ENCODE measurements at regions of chr22 and their contacts with region 1.

Region 1: DNA sequence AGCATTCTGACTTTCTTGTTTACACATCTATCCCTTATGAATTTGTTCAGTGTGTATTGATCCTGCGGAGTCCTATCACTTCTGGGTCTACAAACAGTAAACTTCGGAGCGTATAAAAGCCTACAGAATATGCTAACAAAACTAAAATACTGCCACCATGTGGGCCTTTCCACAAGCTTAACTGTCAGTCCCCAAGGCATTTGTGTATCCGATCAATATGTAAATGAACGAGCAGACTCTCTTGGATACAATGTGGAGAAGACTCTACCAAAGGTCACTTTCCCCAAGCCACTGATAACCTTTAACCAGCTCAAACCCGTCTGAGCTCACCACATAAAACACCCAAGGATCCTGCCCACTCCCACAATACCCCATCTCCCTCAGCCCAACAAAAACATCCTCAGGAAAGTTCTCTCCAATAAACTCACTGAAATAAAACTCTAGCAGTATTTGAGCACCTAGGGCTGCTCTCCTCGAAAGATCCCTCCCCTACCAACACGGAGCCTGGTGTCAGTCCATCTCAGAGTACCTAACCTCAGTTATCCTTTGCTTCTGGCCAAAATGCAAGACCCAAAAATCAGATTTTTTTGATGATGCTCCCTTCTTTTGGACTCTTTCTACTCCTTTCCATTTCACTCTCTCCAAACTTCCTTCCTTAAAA is 17.8 kb downstream of the ADA2 start:
- DNase-seq: peak; percentile 53
- ATAC-seq: peak; percentile 95
- H3K4me3 ChIP-seq: no peak overlapping the region; a peak in 1 of 6 replicates
- H3K27ac ChIP-seq: no peak overlapping the region
- H3K4me1 ChIP-seq: peaks cover 12% of the 10 kb centered on the region
- H3K27me3 ChIP-seq: no peaks in the 10 kb centered on the region
- CTCF ChIP-seq: peak; percentile 68
- EP300 ChIP-seq: no peak
- POLR2A ChIP-seq: no peak
- RAD21 ChIP-seq: no peak

Region 2: GRCh38 chr22:17171313-17172171 is 29.9 kb before region 1 on chr22:
- CTCF ChIA-PET with region 1: no interaction called
- POLR2A ChIA-PET with region 1: interaction called, 13 read pairs
- in situ Hi-C with region 1: no loop called
- intact Hi-C with region 1: loop called (anchors 1 kb)
- DNase-seq: peak; percentile 79
- ATAC-seq: peak; percentile 96
- H3K4me3 ChIP-seq: peak overlapping the region; percentile 49 to 78 (median 68); a peak in 5 of 6 replicates
- H3K27ac ChIP-seq: peak overlapping the region; percentile 44
- H3K4me1 ChIP-seq: no peaks in the 10 kb centered on the region
- H3K27me3 ChIP-seq: no peaks in the 10 kb centered on the region
- CTCF ChIP-seq: peak; percentile 78
- EP300 ChIP-seq: peak in 1 of 2 experiments; percentile 41; a peak in 1 of 4 replicates
- POLR2A ChIP-seq: 0 out of 4 replicates have a peak, but pooled peaks have one; percentile 33 to 37
- RAD21 ChIP-seq: peak; percentile 86

Region 3: GRCh38 chr22:17191163-17191784 is 10.1 kb before region 1 on chr22:
- CTCF ChIA-PET with region 1: no interaction called
- POLR2A ChIA-PET with region 1: no interaction called
- in situ Hi-C with region 1: no loop called
- intact Hi-C with region 1: no loop called
- DNase-seq: no peak
- ATAC-seq: no peak
- H3K4me3 ChIP-seq: no peak overlapping the region
- H3K27ac ChIP-seq: no peak overlapping the region
- H3K4me1 ChIP-seq: no peaks in the 10 kb centered on the region
- H3K27me3 ChIP-seq: peaks cover 0 to 3% of the 10 kb centered on the region in 2 experiments; a peak in 2 of 5 replicates
- CTCF ChIP-seq: no peak
- EP300 ChIP-seq: no peak
- POLR2A ChIP-seq: no peak
- RAD21 ChIP-seq: no peak

Region 4: GRCh38 chr22:17213976-17214375 is 12.6 kb after region 1 on chr22:
- CTCF ChIA-PET with region 1: no interaction called
- POLR2A ChIA-PET with region 1: no interaction called
- in situ Hi-C with region 1: no loop called
- intact Hi-C with region 1: no loop called
- DNase-seq: peak; percentile 21
- ATAC-seq: peak; percentile 79
- H3K4me3 ChIP-seq: no peak overlapping the region
- H3K27ac ChIP-seq: no peak overlapping the region
- H3K4me1 ChIP-seq: no peaks in the 10 kb centered on the region
- H3K27me3 ChIP-seq: no peaks in the 10 kb centered on the region
- CTCF ChIP-seq: peak; percentile 18; the same call in 1 of the 2 replicates
- EP300 ChIP-seq: no peak
- POLR2A ChIP-seq: no peak
- RAD21 ChIP-seq: no peak

Region 5: GRCh38 chr22:17237038-17237668 is 35.7 kb after region 1 on chr22:
- CTCF ChIA-PET with region 1: no interaction called
- POLR2A ChIA-PET with region 1: no interaction called
- in situ Hi-C with region 1: no loop called
- intact Hi-C with region 1: no loop called
- DNase-seq: no peak
- ATAC-seq: peak; percentile 63
- H3K4me3 ChIP-seq: peak overlapping the region in 2 of 3 experiments; percentile 15 to 54; a peak in 3 of 6 replicates
- H3K27ac ChIP-seq: no peak overlapping the region
- H3K4me1 ChIP-seq: no peaks in the 10 kb centered on the region
- H3K27me3 ChIP-seq: peaks cover 0 to 11% of the 10 kb centered on the region in 2 experiments; a peak in 1 of 5 replicates
- CTCF ChIP-seq: no peak
- EP300 ChIP-seq: no peak
- POLR2A ChIP-seq: no peak
- RAD21 ChIP-seq: no peak

Measured in HepG2 (cell line).